ENCODE measurements at regions of chr7 and their contacts with region 1.

Region 1: GRCh38 chr7:85890244-85890811 is 703.5 kb upstream of the SEMA3D start:
- DNase-seq: no peak
- ATAC-seq: peak in 1 of 2 donors; percentile 62
- H3K4me3 ChIP-seq: no peak overlapping the region
- H3K27ac ChIP-seq: no peak overlapping the region
- H3K4me1 ChIP-seq: no peaks in the 10 kb centered on the region
- H3K27me3 ChIP-seq: no peaks in the 10 kb centered on the region
- CTCF ChIP-seq: peak; percentile 47

Region 2: GRCh38 chr7:85483177-85483576 is 407.2 kb before region 1 on chr7:
- intact Hi-C with region 1: no loop called
- DNase-seq: no peak
- ATAC-seq: no peak
- H3K4me3 ChIP-seq: no peak overlapping the region
- H3K27ac ChIP-seq: no peak overlapping the region
- H3K4me1 ChIP-seq: no peaks in the 10 kb centered on the region
- H3K27me3 ChIP-seq: no peaks in the 10 kb centered on the region
- CTCF ChIP-seq: no peak

Region 3: GRCh38 chr7:86469680-86470295 is 579.5 kb after region 1 on chr7:
- intact Hi-C with region 1: loop called (anchors 5 kb)
- DNase-seq: no peak
- ATAC-seq: peak; percentile 68 to 90
- H3K4me3 ChIP-seq: no peak overlapping the region
- H3K27ac ChIP-seq: no peak overlapping the region
- H3K4me1 ChIP-seq: no peaks in the 10 kb centered on the region
- H3K27me3 ChIP-seq: no peaks in the 10 kb centered on the region
- CTCF ChIP-seq: peak; percentile 65